Left ventricle myocardium superior (tissue), 1 donor: ENCODE measurements at regions of chr2 and their contacts with region 1.

Region 1: DNA sequence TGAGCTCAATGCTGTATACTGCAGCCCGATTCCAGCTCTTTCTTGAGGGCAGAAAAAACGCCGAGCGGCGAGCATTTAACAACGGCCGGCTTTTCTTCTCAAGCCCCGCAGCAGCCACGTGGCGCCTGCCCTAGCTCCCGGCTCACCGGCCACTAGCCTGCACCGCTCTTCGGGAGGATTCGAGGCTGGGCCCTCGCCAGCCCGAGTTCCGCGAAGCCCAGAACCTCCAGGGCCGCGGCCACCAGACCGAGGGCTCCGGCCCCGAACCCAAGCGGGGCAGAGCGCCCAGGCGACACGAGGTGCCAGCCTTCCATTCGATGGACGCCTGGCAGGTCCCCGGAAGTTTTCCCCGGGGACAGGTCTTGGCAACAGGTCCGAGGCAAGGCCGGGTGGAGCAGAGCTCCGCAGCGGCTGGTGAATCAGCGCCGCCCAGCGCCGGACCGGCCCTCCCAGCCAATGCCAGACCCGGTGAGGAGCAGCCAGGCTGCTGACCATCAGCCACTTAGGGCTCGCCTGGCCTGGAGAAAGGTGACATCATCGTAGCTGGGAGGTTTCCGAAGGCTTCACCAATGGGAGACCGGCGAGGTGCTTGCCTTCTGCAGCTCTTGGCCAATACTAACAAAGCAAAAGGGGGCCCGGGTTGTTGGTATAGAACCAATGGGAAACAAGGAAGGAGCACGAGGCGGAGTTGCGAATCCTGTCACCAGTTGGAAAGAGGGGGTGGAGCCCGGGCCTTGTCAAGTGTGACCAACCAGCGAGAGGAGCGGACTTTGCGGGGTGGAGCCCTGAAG is 544 bp upstream of the MXD1 start:
- DNase-seq: peak; percentile 99
- ATAC-seq: peak; percentile 95

Region 2: GRCh38 chr2:69397234-69397633 is 517.1 kb before region 1 on chr2:
- intact Hi-C with region 1: no loop called
- DNase-seq: no peak
- ATAC-seq: no peak

Region 3: DNA sequence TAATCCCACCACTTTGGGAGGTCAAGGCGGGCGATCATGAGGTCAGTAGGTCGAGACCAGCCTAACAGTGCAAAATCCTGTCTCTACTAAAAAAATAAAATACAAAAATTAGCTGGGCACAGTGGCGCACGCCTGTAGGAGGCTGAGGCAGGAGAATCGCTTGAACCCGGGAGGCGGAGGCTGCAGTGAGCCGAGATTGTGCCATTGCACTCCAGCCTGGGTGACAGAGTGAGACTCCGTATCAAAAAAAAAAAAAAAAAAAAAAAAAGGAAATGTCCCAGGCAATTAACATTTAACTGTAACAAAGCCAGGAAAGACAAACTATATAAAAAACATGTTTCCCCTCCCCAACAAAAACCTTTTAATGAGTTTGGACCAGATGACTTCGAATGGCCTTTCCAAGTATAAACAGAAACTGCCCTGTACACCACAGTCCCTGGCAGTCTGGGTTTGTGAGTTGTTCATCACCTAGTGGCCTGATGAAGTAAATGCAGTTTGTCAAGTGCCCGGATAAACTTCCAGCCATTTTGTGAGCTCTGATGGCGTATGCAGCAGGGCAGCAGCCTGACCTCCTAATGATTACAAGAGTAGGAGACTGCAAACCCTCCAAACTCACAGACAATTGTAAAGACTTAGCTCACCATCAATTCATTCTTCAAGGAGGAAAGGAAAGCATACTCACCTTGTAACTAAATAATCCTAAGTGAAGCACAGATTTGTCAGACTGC is 156.3 kb after region 1 on chr2:
- intact Hi-C with region 1: loop called (anchors 5 kb)
- DNase-seq: peak; percentile 40
- ATAC-seq: peak; percentile 96

Region 4: GRCh38 chr2:70142590-70143313 is 228.4 kb after region 1 on chr2:
- intact Hi-C with region 1: loop called (anchors 5 kb)
- DNase-seq: peak; percentile 100
- ATAC-seq: peak; percentile 88